Activated naive CD4-positive, alpha-beta T cell treated with anti-CD3 and anti-CD28 coated beads for 36 hours (primary cell): ENCODE measurements at regions of chr1 and their contacts with region 1.

Region 1: GRCh38 chr1:193059268-193060225 is at the starts of genes RO60 and UCHL5:
- DNase-seq: peak; percentile 97
- H3K4me3 Mint-ChIP-seq: peak within 1 kb of the TSS; percentile 94
- H3K27ac Mint-ChIP-seq: peak within 1 kb of the TSS; percentile 97
- H3K4me1 Mint-ChIP-seq: peaks cover 59% of the 10 kb centered on the region
- H3K27me3 Mint-ChIP-seq: no peaks in the 10 kb centered on the region
- total RNA-seq, gene RO60: 42.8 to 48.0 TPM
- total RNA-seq, gene UCHL5: 63.4 to 68.8 TPM

Region 2: GRCh38 chr1:192936313-192937018 is 123.1 kb before region 1 on chr1:
- CTCF ChIA-PET with region 1: no interaction called
- intact Hi-C with region 1: loop called (anchors 1 kb)
- DNase-seq: peak; percentile 20
- H3K4me3 Mint-ChIP-seq: no peak overlapping the region
- H3K27ac Mint-ChIP-seq: peak overlapping the region; percentile 32
- H3K4me1 Mint-ChIP-seq: peaks cover 12% of the 10 kb centered on the region
- H3K27me3 Mint-ChIP-seq: no peaks in the 10 kb centered on the region

Region 3: GRCh38 chr1:193009501-193009900 is 50.0 kb before region 1 on chr1:
- CTCF ChIA-PET with region 1: no interaction called
- intact Hi-C with region 1: no loop called
- DNase-seq: no peak
- H3K4me3 Mint-ChIP-seq: no peak overlapping the region
- H3K27ac Mint-ChIP-seq: no peak overlapping the region
- H3K4me1 Mint-ChIP-seq: peaks cover 2% of the 10 kb centered on the region
- H3K27me3 Mint-ChIP-seq: no peaks in the 10 kb centered on the region

Region 4: DNA sequence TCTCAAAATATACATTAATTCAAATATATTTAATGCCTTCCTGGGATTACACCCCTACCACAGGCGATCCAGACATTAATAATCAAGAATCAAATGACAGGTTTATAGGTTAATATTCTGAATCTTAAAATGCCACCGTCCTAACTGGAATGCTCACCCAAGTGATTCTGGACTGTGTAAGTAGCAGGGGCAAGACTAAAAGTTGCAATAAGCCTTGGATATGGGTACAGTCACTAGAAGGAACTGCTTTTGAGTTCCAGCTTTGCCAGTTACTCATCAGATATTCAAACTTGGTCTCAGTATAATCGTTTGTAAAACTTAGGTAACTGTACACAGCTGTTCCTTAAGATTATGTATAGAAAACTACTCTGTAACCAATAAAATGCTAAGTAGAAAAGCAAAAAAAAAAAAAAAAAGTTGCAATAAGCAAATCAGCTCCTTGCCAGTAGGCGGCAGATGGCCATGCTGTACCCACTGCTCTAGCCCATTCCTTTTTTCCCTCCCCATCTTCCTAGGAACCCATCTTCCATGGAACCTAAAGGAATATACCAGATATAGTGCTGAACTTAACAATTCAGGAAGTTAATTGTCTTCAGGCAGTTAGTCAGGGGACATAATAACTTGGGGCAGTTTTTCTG is 10.3 kb after region 1 on chr1:
- CTCF ChIA-PET with region 1: interaction called, 3 read pairs
- intact Hi-C with region 1: loop called (anchors 1 kb)
- DNase-seq: no peak
- H3K4me3 Mint-ChIP-seq: no peak overlapping the region
- H3K27ac Mint-ChIP-seq: no peak overlapping the region
- H3K4me1 Mint-ChIP-seq: peaks cover 50% of the 10 kb centered on the region
- H3K27me3 Mint-ChIP-seq: no peaks in the 10 kb centered on the region

Region 5: DNA sequence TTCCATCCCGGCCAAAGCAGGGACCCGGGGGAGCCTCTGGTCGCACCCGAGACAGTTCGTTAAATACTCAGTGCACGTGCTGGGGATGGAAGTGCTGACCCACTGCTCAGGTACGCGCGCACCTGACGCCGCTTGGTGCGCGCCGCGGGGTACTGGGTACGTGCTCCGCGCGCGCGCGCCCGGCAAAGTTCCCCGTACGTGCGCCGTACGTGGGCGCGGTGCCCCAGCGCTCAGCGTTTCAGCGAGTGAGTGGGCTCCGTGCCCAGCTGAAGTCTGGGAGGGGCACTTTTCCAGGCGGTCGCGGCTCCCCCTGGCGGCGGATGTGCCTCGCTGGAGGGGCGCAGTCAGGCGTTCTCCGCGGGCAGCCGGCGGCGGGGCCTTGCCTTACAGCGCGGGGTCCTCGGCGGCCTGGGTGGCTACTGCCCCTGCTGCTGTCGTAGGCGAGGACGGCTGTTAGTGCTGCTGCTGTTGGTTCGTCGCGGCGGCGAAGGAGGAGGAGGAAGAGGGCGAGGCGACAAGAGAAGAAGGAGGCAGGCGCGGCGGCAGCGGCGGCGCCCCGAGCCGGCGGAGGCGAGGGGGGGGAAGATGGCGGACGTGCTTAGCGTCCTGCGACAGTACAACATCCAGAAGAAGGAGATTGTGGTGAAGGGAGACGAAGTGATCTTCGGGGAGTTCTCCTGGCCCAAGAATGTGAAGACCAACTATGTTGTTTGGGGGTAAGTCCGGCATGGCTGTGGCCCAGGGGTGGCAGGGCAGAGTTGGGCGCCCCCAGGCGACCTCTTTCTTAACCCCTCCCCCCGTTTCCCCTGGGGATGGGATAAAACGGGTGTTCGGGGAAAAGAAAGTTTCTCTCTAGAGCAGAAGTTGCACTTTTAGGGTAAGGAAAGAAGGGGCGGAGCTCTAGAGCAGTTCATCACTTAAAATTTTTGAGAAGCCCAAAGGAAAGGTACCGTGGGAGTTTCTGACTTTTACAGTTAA is 62.4 kb after region 1 on chr1 and contains the start of gene CDC73:
- CTCF ChIA-PET with region 1: interaction called, 9 read pairs
- intact Hi-C with region 1: loop called (anchors 1 kb)
- DNase-seq: peak; percentile 97
- H3K4me3 Mint-ChIP-seq: peak within 1 kb of the TSS; percentile 92
- H3K27ac Mint-ChIP-seq: peak within 1 kb of the TSS; percentile 92
- H3K4me1 Mint-ChIP-seq: peaks cover 43% of the 10 kb centered on the region
- H3K27me3 Mint-ChIP-seq: peaks cover 1% of the 10 kb centered on the region
- total RNA-seq, gene CDC73: 39.0 to 45.2 TPM

Region 6: GRCh38 chr1:194052514-194053333 is 993.2 kb after region 1 on chr1:
- CTCF ChIA-PET with region 1: no interaction called
- intact Hi-C with region 1: loop called (anchors 10 kb)
- DNase-seq: no peak
- H3K4me3 Mint-ChIP-seq: peak overlapping the region; percentile 55
- H3K27ac Mint-ChIP-seq: peak overlapping the region; percentile 81
- H3K4me1 Mint-ChIP-seq: peaks cover 59% of the 10 kb centered on the region
- H3K27me3 Mint-ChIP-seq: no peaks in the 10 kb centered on the region